ENCODE measurements at regions of chr7 and their contacts with region 1.

Region 1: DNA sequence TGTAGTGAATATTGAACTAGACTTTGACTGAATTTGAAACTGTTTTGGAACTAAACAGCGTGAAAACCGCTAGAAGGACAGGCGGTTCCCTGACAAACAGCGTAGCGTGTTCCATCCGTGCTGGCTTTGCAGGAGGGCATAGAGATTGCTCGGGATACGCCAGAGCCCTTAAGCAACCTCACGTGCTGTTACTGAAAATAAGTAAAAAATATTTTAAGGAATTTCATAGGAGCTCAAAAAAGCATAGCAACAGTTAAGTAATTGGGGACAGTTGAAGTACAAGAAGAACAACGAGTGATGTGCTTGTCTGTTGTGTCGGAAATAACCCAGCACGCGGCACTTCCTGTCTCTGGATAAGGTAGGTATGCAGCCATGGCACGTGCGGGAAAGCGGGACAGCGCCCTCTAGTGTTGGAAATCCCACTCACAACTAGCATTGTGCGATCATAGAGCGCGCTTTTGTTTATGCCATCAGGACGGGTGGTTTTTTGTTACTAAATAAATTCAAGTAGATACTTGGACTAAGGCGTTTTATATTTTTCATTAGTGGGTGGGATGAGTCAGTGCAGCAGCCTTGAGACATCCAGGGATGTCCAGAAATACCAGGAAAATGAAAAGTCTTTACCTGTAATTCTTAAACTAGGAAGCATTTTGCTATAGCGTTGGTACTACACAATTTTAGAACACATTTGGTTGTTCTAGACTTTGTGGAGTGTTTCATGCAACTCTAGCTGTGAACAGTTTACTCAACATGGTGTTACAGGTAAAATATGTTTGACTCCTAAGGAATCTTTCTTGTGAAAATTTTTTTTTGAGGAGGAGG is 50.4 kb downstream of the DNAJB6 start:
- DNase-seq: peak; percentile 83 to 94 (median 85)
- H3K4me3 ChIP-seq: no peak overlapping the region
- H3K4me3 Mint-ChIP-seq: peak overlapping the region in 7 of 8 donors; percentile 29 to 69 (median 37)
- H3K27ac ChIP-seq: peak overlapping the region; percentile 35
- H3K27ac Mint-ChIP-seq: peak overlapping the region; percentile 77 to 96 (median 86)
- H3K4me1 ChIP-seq: peaks cover 44% of the 10 kb centered on the region
- H3K4me1 Mint-ChIP-seq: peaks cover 31 to 51% (median 40%) of the 10 kb centered on the region in 4 donors
- H3K27me3 ChIP-seq: no peaks in the 10 kb centered on the region
- H3K27me3 Mint-ChIP-seq: no peaks in the 10 kb centered on the region

Region 2: DNA sequence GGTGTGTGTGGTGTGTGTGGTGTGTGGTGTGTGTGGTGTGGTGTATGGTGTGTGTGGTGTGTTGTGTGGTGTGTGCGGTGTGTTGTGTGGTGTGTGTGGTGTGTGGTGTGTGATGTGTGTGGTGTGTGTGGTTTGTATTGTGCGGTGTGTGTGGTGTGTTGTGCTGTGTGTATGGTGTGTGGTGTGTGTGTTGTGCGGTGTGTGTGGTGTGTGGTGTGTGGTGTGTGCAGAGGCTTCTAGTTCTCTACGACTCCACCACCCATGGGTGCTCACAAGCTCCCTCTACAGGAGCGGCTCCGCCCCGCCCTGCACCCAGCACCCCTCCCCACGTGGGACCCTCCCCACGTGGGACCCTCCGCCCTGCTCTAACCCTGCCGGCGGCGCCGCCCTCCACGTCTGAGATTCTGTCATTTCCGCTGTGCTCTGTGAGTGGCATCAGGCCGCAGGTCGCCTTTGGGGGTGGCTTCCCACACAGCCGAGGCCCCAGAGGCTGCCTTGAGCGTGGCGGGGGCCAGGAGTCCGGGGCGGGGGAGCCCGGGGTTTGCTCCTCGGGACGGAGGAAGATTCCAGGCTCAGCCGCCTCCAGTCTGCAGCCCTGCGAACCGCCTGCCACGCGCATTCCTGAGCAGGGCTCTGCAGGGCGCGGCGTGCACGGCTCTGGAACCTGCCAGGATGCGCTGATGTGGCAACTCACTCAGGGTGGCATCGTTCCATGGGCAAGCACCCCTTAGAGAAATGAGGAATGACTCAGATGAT is 87.4 kb before region 1 on chr7:
- CTCF ChIA-PET with region 1: no interaction called
- POLR2A ChIA-PET with region 1: no interaction called
- intact Hi-C with region 1: loop called (anchors 1 kb)
- DNase-seq: peak; percentile 42 to 65 (median 57)
- H3K4me3 ChIP-seq: no peak overlapping the region
- H3K4me3 Mint-ChIP-seq: no peak overlapping the region
- H3K27ac ChIP-seq: peak overlapping the region; percentile 9
- H3K27ac Mint-ChIP-seq: peak overlapping the region in 5 of 7 donors; percentile 86 to 96 (median 93)
- H3K4me1 ChIP-seq: peaks cover 20% of the 10 kb centered on the region
- H3K4me1 Mint-ChIP-seq: peaks cover 26 to 35% (median 30%) of the 10 kb centered on the region in 4 donors
- H3K27me3 ChIP-seq: no peaks in the 10 kb centered on the region
- H3K27me3 Mint-ChIP-seq: no peaks in the 10 kb centered on the region

Region 3: DNA sequence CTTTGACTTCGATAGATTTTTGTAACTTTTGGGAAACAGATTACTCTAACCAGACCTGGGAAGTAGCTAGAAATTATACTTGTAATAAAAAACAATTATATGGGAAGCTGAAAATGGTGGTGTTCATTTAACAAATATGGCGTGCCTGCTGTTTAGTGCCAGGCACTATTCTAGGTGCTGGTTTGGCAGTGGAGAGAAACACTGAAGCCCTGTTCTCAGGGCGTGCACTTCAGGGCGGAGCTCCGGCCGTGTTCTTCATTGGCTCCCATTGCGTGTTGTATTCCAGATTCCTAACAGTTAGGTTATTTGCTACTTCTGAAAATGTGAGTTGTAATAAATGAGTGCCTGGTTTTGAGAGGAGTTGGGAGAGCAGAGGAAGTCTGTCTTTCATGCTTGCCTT is 11.8 kb before region 1 on chr7:
- CTCF ChIA-PET with region 1: interaction called, 11 read pairs
- POLR2A ChIA-PET with region 1: no interaction called
- intact Hi-C with region 1: no loop called
- DNase-seq: no peak
- H3K4me3 ChIP-seq: no peak overlapping the region
- H3K4me3 Mint-ChIP-seq: peak overlapping the region in 2 of 8 donors; percentile 14 to 25
- H3K27ac ChIP-seq: no peak overlapping the region
- H3K27ac Mint-ChIP-seq: peak overlapping the region in 5 of 7 donors; percentile 6 to 78 (median 42)
- H3K4me1 ChIP-seq: peaks cover 39% of the 10 kb centered on the region
- H3K4me1 Mint-ChIP-seq: peaks cover 51 to 77% (median 62%) of the 10 kb centered on the region in 4 donors
- H3K27me3 ChIP-seq: no peaks in the 10 kb centered on the region
- H3K27me3 Mint-ChIP-seq: no peaks in the 10 kb centered on the region

Measured in CD4-positive, alpha-beta memory T cell (primary cell).